Posterior cingulate gyrus (tissue), 11 donors: ENCODE measurements at regions of chr15 and their contacts with region 1.

Region 1: GRCh38 chr15:45790325-45790943 is 155.6 kb downstream of the SQOR start:
- DNase-seq: no peak

Region 2: GRCh38 chr15:45705510-45706473 is 84.6 kb before region 1 on chr15:
- intact Hi-C with region 1: loop called (anchors 1 kb)
- DNase-seq: peak; percentile 47 to 96 (median 78)

Region 3: GRCh38 chr15:46304320-46304719 is 513.9 kb after region 1 on chr15:
- intact Hi-C with region 1: loop called (anchors 5 kb)
- DNase-seq: no peak